ENCODE measurements at regions of chr12 and their contacts with region 1.

Region 1: GRCh38 chr12:109844983-109845823 is 12.0 kb upstream of the TRPV4 start:
- DNase-seq: no peak
- H3K4me3 ChIP-seq: peak overlapping the region; percentile 54
- CTCF ChIP-seq: peak; percentile 98

Region 2: DNA sequence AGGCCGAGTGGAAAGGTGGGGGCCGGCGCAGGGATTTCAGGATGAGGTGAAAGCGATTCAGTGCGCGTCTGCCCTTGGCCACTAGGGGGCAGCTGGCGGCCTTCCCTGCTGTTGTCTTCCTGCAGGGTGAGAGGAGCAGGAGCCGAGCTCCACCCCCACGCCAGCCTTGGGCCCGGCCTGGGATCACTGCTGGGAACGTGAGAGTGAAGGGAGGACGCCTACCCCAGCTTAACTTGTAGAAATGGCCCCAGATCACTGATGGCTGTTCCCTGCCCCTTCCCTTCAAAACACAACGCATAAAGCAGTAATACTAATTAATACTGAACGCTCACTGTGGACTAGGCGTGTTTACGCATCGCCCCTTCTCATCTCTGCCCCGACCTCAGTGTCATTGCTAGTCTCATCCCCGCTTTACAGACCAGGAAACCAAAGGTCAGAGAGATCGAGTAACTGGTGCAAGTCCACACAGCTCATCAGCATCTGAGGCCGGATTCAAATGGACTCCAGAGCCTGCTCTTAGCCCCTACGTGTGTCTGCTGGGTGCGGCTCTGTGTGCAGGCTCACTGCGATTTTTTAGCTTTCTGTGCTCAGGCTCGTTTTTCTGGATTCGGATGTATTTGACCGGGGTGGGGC is 247.3 kb before region 1 on chr12:
- CTCF ChIA-PET with region 1: interaction called, 10 read pairs
- POLR2A ChIA-PET with region 1: no interaction called
- DNase-seq: peak; percentile 7
- H3K4me3 ChIP-seq: no peak overlapping the region; the same call in 1 of the 2 replicates
- CTCF ChIP-seq: peak; percentile 97

Region 3: GRCh38 chr12:109811624-109811995 is 33.6 kb before region 1 on chr12:
- CTCF ChIA-PET with region 1: interaction called, 275 read pairs
- POLR2A ChIA-PET with region 1: no interaction called
- DNase-seq: no peak
- H3K4me3 ChIP-seq: no peak overlapping the region
- CTCF ChIP-seq: no peak

Region 4: DNA sequence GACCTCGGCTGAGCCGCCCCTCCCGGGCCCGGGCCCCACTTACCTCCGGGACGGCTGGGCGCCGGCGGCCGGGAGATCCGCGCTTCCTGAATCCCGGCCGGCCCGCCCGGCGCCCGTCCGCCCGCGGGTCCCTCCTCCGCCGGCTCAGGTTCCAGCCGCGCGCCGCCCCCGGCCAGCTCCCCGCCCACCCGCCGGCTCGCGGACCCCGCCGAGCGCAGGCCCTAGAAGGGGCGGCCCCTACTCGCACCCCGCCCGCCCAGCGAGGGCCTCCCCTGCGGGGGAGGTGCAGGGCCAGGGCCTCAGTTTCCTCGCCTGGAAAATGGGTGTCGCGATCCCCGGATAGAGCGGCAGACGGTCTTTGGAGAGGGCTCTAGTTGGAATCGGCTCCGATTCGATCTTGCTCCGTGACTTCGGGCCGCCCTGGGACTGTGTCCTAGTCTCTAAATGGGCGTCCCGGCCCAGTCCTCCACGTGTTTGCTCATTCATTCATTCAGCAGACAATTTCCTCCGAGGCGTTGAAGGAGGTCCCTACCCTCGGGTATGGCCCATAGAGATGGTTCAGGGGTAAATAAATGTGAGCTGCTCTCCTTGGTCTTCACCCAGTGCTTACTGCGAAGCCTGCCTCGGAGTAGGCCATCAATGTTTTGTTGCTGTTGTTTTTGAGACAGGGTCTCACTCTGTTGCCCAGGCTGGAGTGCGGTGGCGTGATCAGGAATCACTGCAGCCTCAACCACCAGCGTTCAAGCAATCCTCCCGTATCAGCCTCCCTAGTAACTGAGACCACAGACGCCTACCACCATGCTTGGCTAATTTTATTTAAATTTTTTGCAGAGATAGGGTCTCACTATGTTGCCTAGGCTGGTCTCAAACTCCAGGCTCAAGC is 11.7 kb before region 1 on chr12 and contains the start of gene TRPV4:
- CTCF ChIA-PET with region 1: interaction called, 190 read pairs
- POLR2A ChIA-PET with region 1: no interaction called
- DNase-seq: no peak
- H3K4me3 ChIP-seq: peak within 1 kb of the TSS; percentile 63
- CTCF ChIP-seq: no peak

Region 5: DNA sequence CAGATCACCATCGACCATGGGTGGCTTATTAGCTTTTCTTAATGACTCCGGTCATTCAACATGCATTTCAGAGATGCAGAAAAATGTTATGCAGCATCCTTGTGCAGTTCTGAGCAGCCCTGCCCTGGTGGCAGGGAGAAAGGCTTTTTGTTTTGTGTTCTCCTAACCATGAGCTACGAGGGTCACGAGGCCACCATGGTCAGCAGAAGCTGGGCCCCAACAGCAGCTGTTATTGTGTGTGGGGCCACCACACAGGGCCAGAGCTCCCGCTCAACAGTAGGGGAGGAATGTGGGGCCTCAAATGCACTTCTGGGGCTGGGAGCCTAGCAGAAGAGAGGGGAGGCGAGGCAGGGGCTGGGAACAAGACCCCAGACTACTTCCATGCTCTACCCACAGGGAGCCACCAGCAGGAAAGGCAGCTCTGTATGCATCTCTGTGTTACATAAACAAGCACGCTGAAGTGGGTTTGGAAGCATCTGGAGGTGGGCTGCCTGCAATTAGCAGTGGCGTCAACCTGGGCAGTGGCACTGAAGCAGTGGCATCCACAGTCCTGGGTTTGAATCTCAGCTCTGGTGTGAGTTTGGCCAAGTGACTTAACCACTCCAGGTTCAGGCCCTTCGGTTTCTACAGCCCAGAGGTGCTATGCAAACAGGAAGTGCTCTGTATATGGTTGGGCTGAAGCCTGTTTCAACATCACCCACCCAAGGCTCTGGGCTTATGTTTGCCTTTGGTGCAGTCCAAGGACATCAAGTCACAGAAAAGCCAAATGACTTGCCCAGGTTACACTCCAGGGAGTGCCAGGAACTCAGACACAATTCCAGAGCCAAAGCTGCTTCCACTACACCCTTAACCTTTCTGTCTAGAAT is 18.9 kb after region 1 on chr12:
- CTCF ChIA-PET with region 1: interaction called, 57 read pairs
- POLR2A ChIA-PET with region 1: interaction called, 4 read pairs
- DNase-seq: no peak
- H3K4me3 ChIP-seq: no peak overlapping the region
- CTCF ChIP-seq: no peak

Region 6: DNA sequence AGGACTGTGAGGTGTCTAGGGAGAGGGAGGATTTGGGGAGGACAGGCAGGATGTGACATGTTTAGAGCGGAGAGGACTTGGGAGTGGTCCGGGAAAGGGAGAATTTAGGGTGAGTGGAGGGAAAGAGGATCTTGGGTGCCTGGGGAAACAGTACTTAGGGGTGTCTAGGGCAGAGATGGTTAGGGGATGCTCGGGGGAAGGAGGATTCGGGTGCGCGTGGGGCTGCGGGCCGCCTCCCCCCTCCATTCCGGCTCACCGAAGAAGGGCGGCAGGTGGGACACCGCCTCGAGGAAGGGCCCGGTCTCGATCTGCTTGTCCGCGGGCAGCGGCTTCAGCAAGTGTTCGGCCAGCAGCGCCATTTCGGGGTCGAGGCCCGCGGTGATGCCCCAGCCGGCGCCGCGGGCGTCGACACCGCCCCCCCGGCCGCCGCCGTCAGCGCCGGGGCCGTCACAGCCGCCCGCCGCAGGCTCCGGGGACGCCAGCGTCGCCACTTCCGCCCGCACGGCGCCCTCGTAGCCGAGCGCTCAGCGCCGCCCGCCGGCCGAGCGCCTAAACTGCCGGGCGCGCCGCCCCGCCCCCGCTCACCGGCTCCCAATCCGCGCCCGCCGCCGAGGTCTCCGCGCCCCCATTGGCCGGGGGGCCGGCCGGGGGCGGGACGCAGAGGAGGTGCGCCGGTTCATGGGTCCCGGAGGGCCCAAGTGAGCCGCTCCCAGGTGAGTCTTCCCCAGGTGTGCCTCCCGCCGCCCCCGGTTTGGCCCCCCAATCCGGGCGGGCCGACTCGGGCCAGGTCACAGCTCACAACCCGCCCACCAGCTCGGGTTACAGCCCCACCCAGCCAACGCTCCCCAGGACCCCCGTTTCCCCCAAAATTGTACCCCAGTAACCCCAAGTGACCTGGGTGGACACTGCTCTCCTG is 35.1 kb after region 1 on chr12 and contains the start of gene GLTP:
- CTCF ChIA-PET with region 1: interaction called, 16 read pairs
- POLR2A ChIA-PET with region 1: no interaction called
- DNase-seq: no peak
- H3K4me3 ChIP-seq: peak within 1 kb of the TSS; percentile 68
- CTCF ChIP-seq: peak; percentile 51

Measured in AG04449 (cell line).